Activated naive CD4-positive, alpha-beta T cell treated with anti-CD3 and anti-CD28 coated beads for 36 hours (primary cell): ENCODE measurements at regions of chr10 and their contacts with region 1.

Region 1: GRCh38 chr10:110210674-110211464 is 3.5 kb downstream of the MXI1 start:
- DNase-seq: peak; percentile 97
- H3K4me3 Mint-ChIP-seq: peak overlapping the region; percentile 96
- H3K27ac Mint-ChIP-seq: peak overlapping the region; percentile 97
- H3K4me1 Mint-ChIP-seq: peaks cover 50% of the 10 kb centered on the region
- H3K27me3 Mint-ChIP-seq: peaks cover 3% of the 10 kb centered on the region

Region 2: DNA sequence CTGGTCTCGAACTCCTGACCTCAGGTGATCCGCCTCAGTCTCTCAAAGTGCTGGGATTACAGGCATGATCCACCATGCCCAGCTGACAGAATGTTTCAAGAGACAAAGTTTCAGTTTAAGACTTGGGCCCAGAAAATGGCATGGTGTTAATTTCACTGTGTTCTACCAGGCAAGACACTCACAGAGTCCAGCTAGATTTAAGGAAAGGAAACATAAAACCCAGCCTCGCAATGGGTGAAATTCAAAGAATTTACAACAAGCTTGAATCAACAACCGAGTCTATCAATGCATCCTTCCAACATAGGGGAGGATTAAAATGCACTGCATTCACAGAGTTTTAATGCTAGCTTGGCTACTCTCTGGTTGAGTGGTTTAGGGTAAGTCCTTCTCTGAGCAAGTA is 1051.5 kb before region 1 on chr10:
- CTCF ChIA-PET with region 1: no interaction called
- intact Hi-C with region 1: no loop called
- DNase-seq: no peak
- H3K4me3 Mint-ChIP-seq: no peak overlapping the region
- H3K27ac Mint-ChIP-seq: no peak overlapping the region
- H3K4me1 Mint-ChIP-seq: no peaks in the 10 kb centered on the region
- H3K27me3 Mint-ChIP-seq: no peaks in the 10 kb centered on the region

Region 3: GRCh38 chr10:109450702-109451101 is 760.2 kb before region 1 on chr10:
- CTCF ChIA-PET with region 1: no interaction called
- intact Hi-C with region 1: no loop called
- DNase-seq: no peak
- H3K4me3 Mint-ChIP-seq: no peak overlapping the region
- H3K27ac Mint-ChIP-seq: no peak overlapping the region
- H3K4me1 Mint-ChIP-seq: no peaks in the 10 kb centered on the region
- H3K27me3 Mint-ChIP-seq: peaks cover 1% of the 10 kb centered on the region

Region 4: GRCh38 chr10:109914966-109915365 is 295.9 kb before region 1 on chr10:
- CTCF ChIA-PET with region 1: no interaction called
- intact Hi-C with region 1: loop called (anchors 1 kb)
- DNase-seq: peak; percentile 72
- H3K4me3 Mint-ChIP-seq: no peak overlapping the region
- H3K27ac Mint-ChIP-seq: peak overlapping the region; percentile 67
- H3K4me1 Mint-ChIP-seq: peaks cover 86% of the 10 kb centered on the region
- H3K27me3 Mint-ChIP-seq: no peaks in the 10 kb centered on the region

Region 5: DNA sequence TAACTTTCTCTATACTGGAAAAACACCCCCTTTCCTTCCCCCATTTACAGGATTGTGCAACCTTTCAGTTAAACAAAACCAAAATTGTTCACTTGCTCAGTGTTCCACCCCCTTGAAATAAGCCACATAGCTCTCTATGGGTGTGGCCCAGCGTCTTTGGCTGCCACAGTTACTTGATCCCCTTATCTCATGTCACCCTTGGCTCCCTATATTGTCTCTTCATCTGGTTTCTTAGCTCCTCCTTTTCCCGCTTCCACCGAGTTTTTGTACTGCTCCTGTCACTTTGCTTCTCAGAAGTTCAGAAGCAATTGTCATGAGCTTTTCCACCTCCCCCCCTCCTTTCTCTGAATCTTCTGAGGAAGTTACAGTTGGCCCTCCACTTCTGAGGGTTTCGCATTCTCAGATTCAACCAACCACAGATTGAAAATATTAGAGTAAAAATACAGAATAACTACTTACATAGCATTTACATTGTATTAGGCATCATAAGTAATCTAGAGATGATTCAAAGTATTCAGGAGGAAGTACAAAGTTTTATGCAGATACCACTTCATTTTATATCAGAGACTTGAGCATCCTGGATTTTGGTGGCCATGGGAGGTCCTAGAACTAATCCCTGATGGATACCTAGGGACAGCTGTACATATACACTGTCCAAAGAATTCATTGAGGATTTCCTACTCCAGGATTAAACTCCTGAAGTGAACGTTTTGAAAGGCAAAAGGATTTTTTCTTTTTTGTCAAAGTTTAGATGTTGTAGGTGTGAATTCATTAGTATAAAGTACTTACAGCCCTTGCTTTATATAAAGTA is 142.7 kb before region 1 on chr10:
- CTCF ChIA-PET with region 1: interaction called, 3 read pairs
- intact Hi-C with region 1: loop called (anchors 2 kb)
- DNase-seq: peak; percentile 75
- H3K4me3 Mint-ChIP-seq: peak overlapping the region; percentile 56
- H3K27ac Mint-ChIP-seq: peak overlapping the region; percentile 91
- H3K4me1 Mint-ChIP-seq: peaks cover 82% of the 10 kb centered on the region
- H3K27me3 Mint-ChIP-seq: no peaks in the 10 kb centered on the region

Region 6: DNA sequence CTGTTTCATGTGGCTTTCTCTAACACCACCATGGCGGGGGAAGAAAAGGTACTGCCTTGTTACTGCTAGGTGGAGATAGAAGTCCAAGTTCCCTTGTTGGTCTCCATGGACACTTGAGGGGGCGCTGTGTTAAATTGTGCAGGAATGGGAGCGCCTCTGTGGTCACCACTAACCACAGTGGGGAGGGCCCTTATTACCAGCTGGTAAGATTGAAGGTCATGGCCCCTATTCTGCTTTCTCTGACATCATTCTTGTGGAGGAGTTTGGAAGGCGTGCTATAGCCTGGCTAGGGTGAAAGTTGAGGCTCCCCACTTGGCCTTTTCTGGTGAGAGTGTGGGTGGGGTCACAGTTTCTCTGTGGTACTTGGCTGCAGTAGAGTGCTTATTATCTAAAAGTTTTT is 18.3 kb before region 1 on chr10:
- CTCF ChIA-PET with region 1: interaction called, 23 read pairs
- intact Hi-C with region 1: no loop called
- DNase-seq: no peak
- H3K4me3 Mint-ChIP-seq: no peak overlapping the region
- H3K27ac Mint-ChIP-seq: no peak overlapping the region
- H3K4me1 Mint-ChIP-seq: no peaks in the 10 kb centered on the region
- H3K27me3 Mint-ChIP-seq: peaks cover 7% of the 10 kb centered on the region

Region 7: DNA sequence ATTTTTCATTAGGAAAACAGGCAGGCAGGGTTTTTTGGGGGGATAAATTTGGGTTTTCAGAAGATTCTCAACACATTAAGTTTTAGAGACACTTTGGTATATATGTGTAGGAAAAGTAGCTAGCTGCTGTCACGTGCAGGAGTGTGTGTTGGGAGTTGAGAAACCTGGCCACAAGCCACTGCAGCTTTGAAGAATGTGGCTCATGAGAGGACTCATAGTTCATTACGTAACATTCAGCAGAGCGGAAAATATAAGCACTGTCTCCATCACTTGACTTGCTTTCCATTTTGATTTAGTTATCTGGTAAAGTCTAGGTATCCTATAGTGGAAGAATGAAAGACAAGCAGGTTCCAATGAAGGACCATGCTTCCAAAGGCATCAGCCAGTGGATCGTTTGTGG is 62.6 kb after region 1 on chr10:
- CTCF ChIA-PET with region 1: interaction called, 93 read pairs
- intact Hi-C with region 1: loop called (anchors 1 kb)
- DNase-seq: peak; percentile 74
- H3K4me3 Mint-ChIP-seq: no peak overlapping the region
- H3K27ac Mint-ChIP-seq: no peak overlapping the region
- H3K4me1 Mint-ChIP-seq: peaks cover 49% of the 10 kb centered on the region
- H3K27me3 Mint-ChIP-seq: no peaks in the 10 kb centered on the region

Region 8: DNA sequence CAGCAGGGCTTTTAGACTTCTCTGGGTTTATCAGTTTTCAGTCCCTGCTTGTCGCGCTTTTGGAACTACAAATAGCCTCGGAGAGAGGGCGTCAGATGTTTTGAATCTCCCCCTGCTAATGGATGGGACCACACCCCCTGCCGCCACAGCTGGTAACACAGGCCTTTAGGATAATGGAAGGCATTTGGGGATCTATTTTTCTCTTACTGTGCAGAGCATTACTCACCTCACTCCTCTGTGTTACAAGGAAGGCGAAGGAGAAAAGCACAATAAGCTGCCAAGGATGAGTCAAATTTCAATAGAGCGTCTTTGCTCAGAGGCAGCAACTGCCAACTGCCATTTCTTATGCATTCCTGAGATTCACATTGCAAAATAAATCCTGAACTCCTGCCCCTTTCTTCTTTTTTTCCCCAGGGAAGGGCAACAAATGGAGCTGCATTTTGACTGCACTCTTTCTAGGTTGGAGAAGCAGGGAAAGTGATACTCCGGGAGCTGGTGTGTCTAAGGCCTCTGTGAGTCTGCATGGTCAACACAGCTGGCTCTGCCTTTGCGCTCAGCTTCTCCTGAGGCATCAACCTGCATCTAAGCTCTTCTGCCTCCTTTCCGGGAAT is 125.3 kb after region 1 on chr10:
- CTCF ChIA-PET with region 1: no interaction called
- intact Hi-C with region 1: no loop called
- DNase-seq: no peak
- H3K4me3 Mint-ChIP-seq: no peak overlapping the region
- H3K27ac Mint-ChIP-seq: no peak overlapping the region
- H3K4me1 Mint-ChIP-seq: peaks cover 7% of the 10 kb centered on the region
- H3K27me3 Mint-ChIP-seq: no peaks in the 10 kb centered on the region

Region 9: GRCh38 chr10:110420401-110421193 is 209.7 kb after region 1 on chr10:
- CTCF ChIA-PET with region 1: no interaction called
- intact Hi-C with region 1: no loop called
- DNase-seq: peak; percentile 52
- H3K4me3 Mint-ChIP-seq: no peak overlapping the region
- H3K27ac Mint-ChIP-seq: peak overlapping the region; percentile 79
- H3K4me1 Mint-ChIP-seq: peaks cover 44% of the 10 kb centered on the region
- H3K27me3 Mint-ChIP-seq: no peaks in the 10 kb centered on the region

Region 10: DNA sequence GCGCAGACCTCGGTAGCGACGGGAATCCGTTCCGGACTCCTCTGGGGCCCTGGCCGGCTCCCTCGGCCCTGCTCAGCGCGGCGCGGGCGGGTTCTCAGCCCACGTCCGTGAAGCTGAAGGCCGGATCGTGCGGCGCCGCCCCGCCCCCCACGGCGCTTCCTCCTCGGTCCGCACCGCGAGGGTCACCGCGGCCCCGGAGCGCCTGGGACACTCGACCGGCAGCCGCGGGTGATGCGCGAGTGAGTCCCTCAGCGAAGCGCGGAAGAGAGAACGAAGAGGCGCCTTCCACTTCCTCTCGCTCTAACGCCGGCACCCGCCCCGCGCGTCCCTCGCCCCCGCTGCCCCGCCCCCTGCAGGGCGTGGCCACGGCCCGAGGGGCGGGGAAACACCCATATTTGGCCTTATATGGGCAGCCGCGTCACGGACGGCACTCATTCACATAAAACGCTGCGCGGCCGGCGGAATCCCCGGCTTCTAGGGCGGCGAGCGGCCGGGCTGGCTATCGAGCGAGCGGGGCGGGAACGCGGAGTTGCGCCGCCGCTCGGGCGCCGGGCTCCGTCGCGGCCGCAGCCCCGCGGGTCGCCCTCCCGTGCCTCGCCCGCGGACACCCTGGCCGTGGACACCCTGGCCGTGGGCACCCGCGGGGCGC is 286.7 kb after region 1 on chr10 and contains the start of gene DUSP5:
- CTCF ChIA-PET with region 1: interaction called, 4 read pairs
- intact Hi-C with region 1: loop called (anchors 2 kb)
- DNase-seq: peak; percentile 94
- H3K4me3 Mint-ChIP-seq: peak within 1 kb of the TSS; percentile 97
- H3K27ac Mint-ChIP-seq: peak within 1 kb of the TSS; percentile 94
- H3K4me1 Mint-ChIP-seq: peaks cover 43% of the 10 kb centered on the region
- H3K27me3 Mint-ChIP-seq: no peaks in the 10 kb centered on the region
- total RNA-seq, gene DUSP5: 51.0 to 53.5 TPM